CD8-positive, alpha-beta memory T cell (primary cell): ENCODE measurements at regions of chr13 and their contacts with region 1.

Region 1: DNA sequence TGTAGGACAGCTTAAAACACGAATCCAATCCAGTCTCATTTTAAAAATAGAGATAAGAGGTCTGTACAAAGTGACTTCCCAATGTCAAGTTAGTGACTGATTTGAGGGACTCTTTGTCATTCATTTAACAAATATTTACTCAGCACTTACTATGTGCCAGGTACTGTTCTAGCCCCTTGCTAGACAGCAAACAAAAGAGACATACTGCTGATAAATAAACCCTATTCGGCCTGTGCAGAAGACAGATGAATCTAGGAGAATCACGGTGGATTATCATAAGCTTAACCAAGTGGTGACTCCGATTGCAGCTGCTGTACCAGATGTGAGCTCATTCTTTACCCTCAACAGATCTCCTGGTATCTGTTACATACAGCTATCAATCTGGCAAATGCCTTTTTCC is 6.4 kb upstream of the ELF1 start:
- DNase-seq: no peak
- H3K4me3 ChIP-seq: no peak overlapping the region
- H3K4me3 Mint-ChIP-seq: no peak overlapping the region
- H3K27ac ChIP-seq: no peak overlapping the region
- H3K27ac Mint-ChIP-seq: peak overlapping the region in 1 of 8 donors; percentile 77
- H3K4me1 ChIP-seq: no peaks in the 10 kb centered on the region
- H3K4me1 Mint-ChIP-seq: peaks cover 14 to 43% (median 38%) of the 10 kb centered on the region in 3 donors
- H3K27me3 ChIP-seq: no peaks in the 10 kb centered on the region
- H3K27me3 Mint-ChIP-seq: no peaks in the 10 kb centered on the region

Region 2: DNA sequence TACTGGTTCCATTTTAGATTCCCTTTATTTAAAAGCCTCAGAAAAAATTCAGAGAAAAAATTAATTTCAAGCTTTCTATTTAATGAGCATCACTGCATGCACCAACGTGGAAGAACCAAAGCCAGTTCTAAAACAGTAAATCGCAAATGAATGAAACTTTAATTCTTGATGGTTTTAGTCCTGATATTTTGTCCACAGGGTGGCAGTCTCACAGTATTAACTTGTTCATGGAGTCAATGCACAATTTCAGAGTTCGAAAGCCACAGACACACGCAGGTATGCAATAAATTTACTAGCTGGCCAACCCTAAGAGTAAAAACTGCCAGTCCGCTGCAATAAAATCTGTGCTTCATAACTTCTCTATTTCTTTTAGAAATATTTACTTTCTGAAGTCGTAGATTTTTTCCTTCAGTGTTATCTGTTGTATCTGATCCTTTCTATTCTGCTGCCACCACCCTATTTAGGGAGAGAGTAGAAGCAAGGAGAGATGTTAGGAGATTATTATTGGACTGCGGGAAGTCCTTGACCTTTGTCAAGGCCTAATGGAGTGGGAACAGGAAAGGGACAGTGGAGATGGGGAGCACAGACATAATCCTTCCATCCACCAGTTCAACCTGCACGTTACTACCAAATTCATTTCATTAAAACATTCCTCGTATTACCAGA is 28.8 kb after region 1 on chr13:
- CTCF ChIA-PET with region 1: interaction called, 11 read pairs
- POLR2A ChIA-PET with region 1: interaction called, 31 read pairs
- DNase-seq: peak in 4 of 5 donors; percentile 6 to 59 (median 46)
- H3K4me3 ChIP-seq: no peak overlapping the region
- H3K4me3 Mint-ChIP-seq: peak overlapping the region in 1 of 7 donors; percentile 11
- H3K27ac ChIP-seq: no peak overlapping the region
- H3K27ac Mint-ChIP-seq: peak overlapping the region in 6 of 8 donors; percentile 3 to 69 (median 42)
- H3K4me1 ChIP-seq: peaks cover 21% of the 10 kb centered on the region
- H3K4me1 Mint-ChIP-seq: peaks cover 32 to 51% (median 48%) of the 10 kb centered on the region in 3 donors
- H3K27me3 ChIP-seq: no peaks in the 10 kb centered on the region
- H3K27me3 Mint-ChIP-seq: no peaks in the 10 kb centered on the region